Activated CD8-positive, alpha-beta T cell treated with anti-CD3 and anti-CD28 coated beads for 36 hours (primary cell): ENCODE measurements at regions of chr3 and their contacts with region 1.

Region 1: GRCh38 chr3:101724329-101725193 is at the start of gene CEP97:
- DNase-seq: peak; percentile 96
- ATAC-seq: peak; percentile 92
- H3K4me3 Mint-ChIP-seq: peak within 1 kb of the TSS; percentile 96
- H3K27ac Mint-ChIP-seq: peak within 1 kb of the TSS; percentile 99
- H3K4me1 Mint-ChIP-seq: peaks cover 36% of the 10 kb centered on the region
- H3K27me3 Mint-ChIP-seq: no peaks in the 10 kb centered on the region
- CTCF ChIP-seq: no peak
- total RNA-seq, gene CEP97: 15.9 to 18.7 TPM

Region 2: DNA sequence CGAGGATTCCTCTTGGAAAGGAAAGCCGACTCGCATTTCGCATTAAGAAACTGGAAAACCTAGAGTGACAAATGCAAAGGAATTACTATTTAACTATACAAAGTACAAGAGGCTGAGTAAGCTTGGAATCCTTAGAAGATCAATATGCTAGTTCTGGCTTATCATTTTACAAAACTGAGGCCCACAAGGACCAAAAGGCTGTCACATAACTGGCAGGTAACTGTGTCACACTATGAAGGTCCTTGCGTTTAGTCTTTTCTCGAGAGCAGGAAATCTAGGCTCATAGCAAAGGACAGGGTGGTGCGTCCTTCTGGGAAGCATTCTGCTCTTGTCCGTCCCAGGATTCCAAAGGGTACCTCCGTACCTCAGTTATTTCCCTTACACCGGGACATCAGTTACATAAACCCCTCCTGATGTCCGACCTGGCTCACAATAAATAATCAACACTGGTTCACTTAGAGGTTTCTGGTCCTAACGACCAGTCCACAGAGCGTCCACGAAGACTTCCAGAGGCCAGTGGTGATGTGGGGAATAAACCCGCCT is 38.6 kb before region 1 on chr3:
- CTCF ChIA-PET with region 1: interaction called, 6 read pairs
- POLR2A ChIA-PET with region 1: interaction called, 11 read pairs
- intact Hi-C with region 1: loop called (anchors 5 kb)
- DNase-seq: no peak
- ATAC-seq: no peak
- H3K4me3 Mint-ChIP-seq: peak overlapping the region; percentile 100
- H3K27ac Mint-ChIP-seq: peak overlapping the region; percentile 100
- H3K4me1 Mint-ChIP-seq: peaks cover 39% of the 10 kb centered on the region
- H3K27me3 Mint-ChIP-seq: no peaks in the 10 kb centered on the region
- CTCF ChIP-seq: no peak

Region 3: DNA sequence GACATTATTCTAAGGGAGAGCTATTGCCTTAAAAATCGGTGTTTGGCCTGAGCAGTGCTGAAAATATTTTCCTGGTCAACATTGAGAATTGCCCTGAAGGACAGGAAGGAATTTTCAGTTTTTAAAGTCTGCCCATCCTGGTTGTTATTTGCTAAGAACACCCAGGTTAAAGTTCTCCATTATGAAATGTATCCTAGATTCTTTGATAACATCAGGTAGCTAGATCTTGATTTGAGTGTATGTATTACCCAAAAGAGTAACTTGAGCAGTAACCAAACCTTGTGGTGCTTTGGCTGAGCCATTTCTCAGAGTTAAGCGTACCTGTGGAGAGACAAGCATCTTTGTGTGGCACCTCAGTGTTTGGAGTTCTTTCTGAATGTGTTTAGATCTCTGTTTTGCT is 20.2 kb after region 1 on chr3:
- CTCF ChIA-PET with region 1: no interaction called
- POLR2A ChIA-PET with region 1: no interaction called
- intact Hi-C with region 1: no loop called
- DNase-seq: no peak
- ATAC-seq: no peak
- H3K4me3 Mint-ChIP-seq: no peak overlapping the region
- H3K27ac Mint-ChIP-seq: no peak overlapping the region
- H3K4me1 Mint-ChIP-seq: no peaks in the 10 kb centered on the region
- H3K27me3 Mint-ChIP-seq: no peaks in the 10 kb centered on the region
- CTCF ChIP-seq: no peak

Region 4: GRCh38 chr3:101779047-101779821 is 54.7 kb after region 1 on chr3 and contains the start of gene NXPE3:
- CTCF ChIA-PET with region 1: interaction called, 3 read pairs
- POLR2A ChIA-PET with region 1: interaction called, 5 read pairs
- intact Hi-C with region 1: loop called (anchors 2 kb)
- DNase-seq: peak; percentile 97
- ATAC-seq: peak; percentile 91
- H3K4me3 Mint-ChIP-seq: peak within 1 kb of the TSS; percentile 85
- H3K27ac Mint-ChIP-seq: peak within 1 kb of the TSS; percentile 98
- H3K4me1 Mint-ChIP-seq: peaks cover 48% of the 10 kb centered on the region
- H3K27me3 Mint-ChIP-seq: no peaks in the 10 kb centered on the region
- CTCF ChIP-seq: no peak
- total RNA-seq, gene NXPE3: 20.9 to 21.6 TPM

Region 5: GRCh38 chr3:101809178-101810021 is 84.8 kb after region 1 on chr3:
- CTCF ChIA-PET with region 1: no interaction called
- POLR2A ChIA-PET with region 1: no interaction called
- intact Hi-C with region 1: no loop called
- DNase-seq: peak; percentile 54
- ATAC-seq: peak; percentile 80
- H3K4me3 Mint-ChIP-seq: no peak overlapping the region
- H3K27ac Mint-ChIP-seq: peak overlapping the region; percentile 55
- H3K4me1 Mint-ChIP-seq: peaks cover 51% of the 10 kb centered on the region
- H3K27me3 Mint-ChIP-seq: no peaks in the 10 kb centered on the region
- CTCF ChIP-seq: peak; percentile 90

Region 6: GRCh38 chr3:101984356-101984755 is 259.8 kb after region 1 on chr3:
- CTCF ChIA-PET with region 1: no interaction called
- POLR2A ChIA-PET with region 1: no interaction called
- intact Hi-C with region 1: no loop called
- DNase-seq: no peak
- ATAC-seq: no peak
- H3K4me3 Mint-ChIP-seq: no peak overlapping the region
- H3K27ac Mint-ChIP-seq: no peak overlapping the region
- H3K4me1 Mint-ChIP-seq: peaks cover 16% of the 10 kb centered on the region
- H3K27me3 Mint-ChIP-seq: peaks cover 5% of the 10 kb centered on the region
- CTCF ChIP-seq: no peak